ENCODE measurements at regions of chr1 and their contacts with region 1.

Region 1: GRCh38 chr1:59879574-59879973 is 47.0 kb downstream of the CYP2J2 start:
- DNase-seq: peak; percentile 17
- CTCF ChIP-seq: peak; percentile 31

Region 2: GRCh38 chr1:59947047-59947938 is 67.7 kb after region 1 on chr1:
- CTCF ChIA-PET with region 1: interaction called, 26 read pairs
- POLR2A ChIA-PET with region 1: no interaction called
- DNase-seq: peak; percentile 63
- CTCF ChIP-seq: peak; percentile 87

Region 3: DNA sequence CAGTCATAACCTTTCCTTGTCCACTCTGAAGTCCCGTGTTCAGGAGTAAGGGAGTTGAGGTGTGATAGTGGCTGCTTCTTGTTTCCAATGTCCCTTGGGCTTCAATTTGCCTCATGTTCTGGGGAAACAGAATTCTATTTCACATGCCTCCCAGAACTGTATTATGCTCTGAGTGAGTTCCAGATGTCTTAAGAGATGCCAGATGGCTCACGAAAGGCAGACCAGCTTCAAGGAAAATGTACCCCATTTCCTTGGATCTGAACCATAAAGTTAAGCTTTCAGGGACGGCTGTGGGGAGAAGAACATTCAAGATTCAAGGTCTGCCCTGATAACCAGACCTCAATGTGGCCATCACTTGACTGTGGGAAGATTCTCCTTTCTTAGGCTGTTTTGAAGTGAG is 151.6 kb after region 1 on chr1:
- CTCF ChIA-PET with region 1: no interaction called
- POLR2A ChIA-PET with region 1: no interaction called
- DNase-seq: no peak
- CTCF ChIP-seq: no peak

Measured in GM10248 (cell line).